Activated T-helper 2 cell treated with anti-CD3 and anti-CD28 coated beads, Interferon-gamma antibody, Interleukin-2, Interleukin-4, amounts not matched to agents 10 μg/mL and 5 μg/mL and 100 μg/mL, durations not matched to agents 14 hours and 24 hours and 36 hours (primary cell): ENCODE measurements at regions of chr6 and their contacts with region 1.

Region 1: GRCh38 chr6:132483779-132484679 is 28.9 kb downstream of the STX7 start:
- DNase-seq: peak; percentile 15
- H3K4me3 Mint-ChIP-seq: no peak overlapping the region
- H3K27ac Mint-ChIP-seq: no peak overlapping the region
- H3K4me1 Mint-ChIP-seq: peaks cover 16% of the 10 kb centered on the region
- H3K27me3 Mint-ChIP-seq: peaks cover 4% of the 10 kb centered on the region

Region 2: GRCh38 chr6:132401120-132401945 is 82.7 kb before region 1 on chr6 and contains the start of gene MOXD1:
- intact Hi-C with region 1: loop called (anchors 5 kb)
- DNase-seq: no peak
- H3K4me3 Mint-ChIP-seq: no peak within 1 kb of the TSS
- H3K27ac Mint-ChIP-seq: no peak within 1 kb of the TSS
- H3K4me1 Mint-ChIP-seq: peaks cover 8% of the 10 kb centered on the region
- H3K27me3 Mint-ChIP-seq: peaks cover 73% of the 10 kb centered on the region
- total RNA-seq, gene MOXD1: not detected in 2 replicates

Region 3: GRCh38 chr6:132750455-132751248 is 266.6 kb after region 1 on chr6:
- intact Hi-C with region 1: no loop called
- DNase-seq: no peak
- H3K4me3 Mint-ChIP-seq: no peak overlapping the region
- H3K27ac Mint-ChIP-seq: no peak overlapping the region
- H3K4me1 Mint-ChIP-seq: peaks cover 24% of the 10 kb centered on the region
- H3K27me3 Mint-ChIP-seq: no peaks in the 10 kb centered on the region